IMR-90 (cell line): ENCODE measurements at regions of chr12 and their contacts with region 1.

Region 1: DNA sequence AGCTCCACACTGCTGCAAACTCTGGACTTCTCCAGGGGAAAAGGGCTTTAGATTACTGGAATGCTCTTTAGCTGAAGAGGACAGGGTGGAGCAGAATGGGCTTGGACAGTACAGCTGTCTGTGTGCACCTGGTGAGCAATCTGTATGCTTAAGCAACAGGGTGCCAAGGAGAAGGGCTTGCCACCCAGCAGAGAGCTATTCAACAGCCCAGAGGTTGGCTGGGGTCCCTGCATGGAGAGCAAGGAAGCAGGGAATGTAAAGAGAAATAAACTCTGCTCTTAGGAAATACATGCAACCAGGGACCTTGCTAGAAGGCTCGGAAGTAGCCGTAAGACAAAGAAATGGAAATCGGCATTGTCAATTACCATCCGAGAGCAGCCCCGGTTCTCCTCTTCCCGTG is 53.0 kb upstream of the CORO1C start:
- DNase-seq: no peak
- ATAC-seq: no peak
- H3K4me3 ChIP-seq: no peak overlapping the region
- H3K27ac ChIP-seq: no peak overlapping the region
- H3K4me1 ChIP-seq: peaks cover 10% of the 10 kb centered on the region
- H3K27me3 ChIP-seq: no peaks in the 10 kb centered on the region
- CTCF ChIP-seq: no peak
- POLR2A ChIP-seq: no peak
- RAD21 ChIP-seq: no peak

Region 2: GRCh38 chr12:108664338-108665258 is 119.7 kb before region 1 on chr12:
- CTCF ChIA-PET with region 1: no interaction called
- POLR2A ChIA-PET with region 1: no interaction called
- dilution Hi-C with region 1: no loop called
- in situ Hi-C with region 1: no loop called
- intact Hi-C with region 1: loop called (anchors 5 kb)
- DNase-seq: peak; percentile 95
- ATAC-seq: peak; percentile 92
- H3K4me3 ChIP-seq: no peak overlapping the region
- H3K27ac ChIP-seq: peak overlapping the region; percentile 85
- H3K4me1 ChIP-seq: peaks cover 30% of the 10 kb centered on the region
- H3K27me3 ChIP-seq: no peaks in the 10 kb centered on the region
- CTCF ChIP-seq: peak; percentile 98
- POLR2A ChIP-seq: peak; percentile 31; the same call in 1 of the 2 replicates
- RAD21 ChIP-seq: peak; percentile 99